IMR-90 (cell line): ENCODE measurements at regions of chr12 and their contacts with region 1.

Region 1: DNA sequence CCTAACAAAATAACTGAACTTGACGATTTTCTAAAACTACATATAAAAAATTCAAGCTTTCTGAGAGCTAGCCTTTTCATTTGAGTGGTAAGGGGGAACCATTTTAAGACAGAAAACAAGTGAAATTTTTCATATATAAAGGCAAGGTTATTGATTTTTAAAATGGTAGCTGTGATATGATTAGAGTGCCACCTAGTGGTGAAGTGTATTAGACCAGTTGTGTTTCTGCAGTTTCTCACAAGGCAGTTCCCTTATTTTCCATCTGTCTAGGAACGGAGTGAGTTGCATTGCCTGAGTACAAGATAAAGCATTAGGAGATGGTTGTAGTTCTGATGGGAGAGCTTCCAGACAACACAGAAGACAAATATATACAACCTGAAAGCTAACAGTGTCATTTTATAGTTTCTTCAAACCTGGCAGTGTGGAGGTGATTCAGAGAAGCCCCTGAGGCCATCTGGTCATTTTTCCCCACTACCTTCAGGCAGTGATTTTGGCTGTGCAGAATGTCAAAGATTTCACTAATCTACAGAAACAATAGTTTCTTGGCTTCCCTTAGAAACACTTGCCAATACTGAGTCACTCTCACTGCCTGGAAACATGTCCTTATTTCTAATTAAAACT is 180.8 kb downstream of the C12orf50 start:
- DNase-seq: peak; percentile 82
- ATAC-seq: peak; percentile 72
- H3K4me3 ChIP-seq: no peak overlapping the region
- H3K27ac ChIP-seq: no peak overlapping the region
- H3K4me1 ChIP-seq: peaks cover 3% of the 10 kb centered on the region; the same call in 1 of the 2 replicates
- H3K27me3 ChIP-seq: no peaks in the 10 kb centered on the region
- CTCF ChIP-seq: peak; percentile 92
- POLR2A ChIP-seq: no peak
- RAD21 ChIP-seq: peak; percentile 96

Region 2: GRCh38 chr12:85920324-85920947 is 1927.9 kb before region 1 on chr12:
- CTCF ChIA-PET with region 1: no interaction called
- POLR2A ChIA-PET with region 1: no interaction called
- dilution Hi-C with region 1: no loop called
- in situ Hi-C with region 1: no loop called
- intact Hi-C with region 1: loop called (anchors 5 kb)
- DNase-seq: peak; percentile 6
- ATAC-seq: no peak; the same call in 1 of the 2 replicates
- H3K4me3 ChIP-seq: no peak overlapping the region
- H3K27ac ChIP-seq: no peak overlapping the region
- H3K4me1 ChIP-seq: no peaks in the 10 kb centered on the region
- H3K27me3 ChIP-seq: no peaks in the 10 kb centered on the region
- CTCF ChIP-seq: peak; percentile 56
- POLR2A ChIP-seq: no peak
- RAD21 ChIP-seq: peak; percentile 32

Region 3: DNA sequence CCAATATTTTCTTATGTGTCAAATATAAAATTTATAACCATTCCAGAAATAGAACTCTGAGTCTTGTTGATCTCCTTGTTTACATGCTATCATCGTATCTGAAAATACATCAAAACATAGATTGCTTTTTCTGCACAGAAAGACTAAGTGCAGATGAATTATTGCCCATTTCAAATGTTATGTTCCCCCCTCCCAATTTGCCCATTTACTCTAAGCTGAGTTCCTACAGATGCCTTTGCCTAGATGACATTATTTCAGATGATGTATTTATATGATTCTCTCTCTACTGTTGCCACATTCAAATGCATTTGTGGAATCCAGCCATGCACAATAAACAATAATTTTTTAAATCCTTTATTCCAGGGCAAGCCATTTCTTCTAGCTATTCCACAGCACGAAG is 782.0 kb before region 1 on chr12:
- CTCF ChIA-PET with region 1: no interaction called
- POLR2A ChIA-PET with region 1: no interaction called
- dilution Hi-C with region 1: no loop called
- in situ Hi-C with region 1: no loop called
- intact Hi-C with region 1: loop called (anchors 1 kb)
- DNase-seq: no peak
- ATAC-seq: no peak
- H3K4me3 ChIP-seq: no peak overlapping the region
- H3K27ac ChIP-seq: no peak overlapping the region
- H3K4me1 ChIP-seq: no peaks in the 10 kb centered on the region
- H3K27me3 ChIP-seq: no peaks in the 10 kb centered on the region
- CTCF ChIP-seq: no peak
- POLR2A ChIP-seq: no peak
- RAD21 ChIP-seq: no peak

Region 4: DNA sequence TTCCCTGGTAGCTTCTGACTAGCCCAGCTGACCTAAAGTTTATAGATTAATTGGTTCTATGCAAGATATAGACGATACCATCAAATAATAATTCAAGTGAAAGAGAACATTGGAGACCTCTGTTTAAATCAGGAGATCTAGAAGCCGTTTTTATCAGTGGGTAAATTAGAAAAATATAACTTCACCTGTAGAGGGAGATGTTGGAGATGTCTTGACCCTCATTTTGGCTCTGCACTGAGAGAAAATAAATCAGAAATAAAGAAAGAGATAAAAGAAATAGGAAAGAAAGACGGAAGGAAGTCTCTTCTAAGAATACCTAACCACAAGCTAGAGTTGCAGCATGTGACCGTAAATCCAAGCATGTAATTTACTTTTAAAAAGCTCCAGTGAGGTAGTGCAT is 503.7 kb before region 1 on chr12:
- CTCF ChIA-PET with region 1: no interaction called
- POLR2A ChIA-PET with region 1: no interaction called
- dilution Hi-C with region 1: no loop called
- in situ Hi-C with region 1: no loop called
- intact Hi-C with region 1: loop called (anchors 2 kb)
- DNase-seq: no peak
- ATAC-seq: no peak
- H3K4me3 ChIP-seq: no peak overlapping the region
- H3K27ac ChIP-seq: no peak overlapping the region
- H3K4me1 ChIP-seq: no peaks in the 10 kb centered on the region
- H3K27me3 ChIP-seq: no peaks in the 10 kb centered on the region
- CTCF ChIP-seq: peak; percentile 30; the same call in 1 of the 2 replicates
- POLR2A ChIP-seq: no peak
- RAD21 ChIP-seq: peak; percentile 24; the same call in 1 of the 2 replicates

Region 5: DNA sequence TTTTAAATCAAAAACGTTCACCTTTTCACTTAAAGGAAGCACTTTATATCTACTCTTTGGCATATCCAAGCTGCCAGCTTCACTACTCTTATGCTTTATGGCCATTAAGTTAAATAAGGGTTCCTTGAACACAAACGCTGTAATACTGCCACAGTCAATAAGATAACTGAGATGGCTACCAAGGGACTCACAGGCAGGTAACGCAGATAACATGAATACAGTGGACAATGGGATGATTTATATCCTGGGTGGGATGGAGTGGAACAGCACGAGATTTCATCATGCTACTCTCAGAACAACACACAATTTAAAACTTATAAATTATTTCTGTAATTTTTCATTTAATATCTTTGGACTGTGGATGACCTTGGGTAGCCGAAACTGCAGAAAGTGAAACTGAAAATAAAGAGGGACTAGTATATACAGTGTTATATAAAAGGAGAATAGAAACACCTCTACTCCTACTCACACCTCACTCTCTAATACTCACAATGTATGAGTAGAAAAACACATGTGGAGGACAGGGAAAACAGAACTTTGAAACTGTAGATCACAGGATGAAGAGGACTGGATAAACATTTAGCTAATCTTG is 186.5 kb before region 1 on chr12:
- CTCF ChIA-PET with region 1: no interaction called
- POLR2A ChIA-PET with region 1: no interaction called
- dilution Hi-C with region 1: no loop called
- in situ Hi-C with region 1: no loop called
- intact Hi-C with region 1: loop called (anchors 5 kb)
- DNase-seq: peak; percentile 3
- ATAC-seq: peak; percentile 76
- H3K4me3 ChIP-seq: no peak overlapping the region; the same call in 1 of the 2 replicates
- H3K27ac ChIP-seq: no peak overlapping the region
- H3K4me1 ChIP-seq: peaks cover 3% of the 10 kb centered on the region; the same call in 1 of the 2 replicates
- H3K27me3 ChIP-seq: no peaks in the 10 kb centered on the region
- CTCF ChIP-seq: no peak
- POLR2A ChIP-seq: no peak
- RAD21 ChIP-seq: no peak

Region 6: GRCh38 chr12:87801860-87802720 is 46.3 kb before region 1 on chr12:
- CTCF ChIA-PET with region 1: no interaction called
- POLR2A ChIA-PET with region 1: no interaction called
- dilution Hi-C with region 1: no loop called
- in situ Hi-C with region 1: no loop called
- intact Hi-C with region 1: no loop called
- DNase-seq: no peak
- ATAC-seq: no peak
- H3K4me3 ChIP-seq: no peak overlapping the region
- H3K27ac ChIP-seq: no peak overlapping the region
- H3K4me1 ChIP-seq: peaks cover 8% of the 10 kb centered on the region; the same call in 1 of the 2 replicates
- H3K27me3 ChIP-seq: no peaks in the 10 kb centered on the region
- CTCF ChIP-seq: no peak
- POLR2A ChIP-seq: no peak
- RAD21 ChIP-seq: no peak

Region 7: DNA sequence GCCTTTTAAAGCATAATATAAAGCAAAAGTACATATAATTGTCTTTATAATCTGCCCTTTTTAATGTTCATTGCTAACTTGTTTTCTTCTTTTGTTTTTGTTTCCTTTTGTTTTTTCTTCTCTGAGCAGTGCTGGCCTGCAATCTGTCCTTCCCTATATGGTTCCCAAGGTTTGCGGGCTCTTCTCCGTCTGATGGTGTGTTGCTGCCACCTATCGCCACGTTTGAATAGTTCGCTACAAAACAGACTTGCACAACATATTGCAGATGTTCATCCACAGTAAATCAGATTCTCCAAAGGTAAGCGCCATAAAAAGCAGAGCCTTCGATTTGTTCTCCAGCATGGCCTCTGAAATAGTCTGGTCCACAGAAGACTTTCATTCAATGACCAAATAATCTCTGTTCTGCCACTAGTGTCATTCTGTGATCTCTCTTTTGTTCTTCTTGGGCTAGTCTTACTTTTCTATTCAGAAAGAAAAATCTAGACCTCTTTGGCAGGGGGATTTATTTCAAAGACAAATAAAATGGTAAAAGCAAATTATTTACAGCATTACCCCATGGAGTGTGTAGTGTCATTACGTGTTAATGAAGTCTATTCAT is 147.3 kb after region 1 on chr12:
- CTCF ChIA-PET with region 1: no interaction called
- POLR2A ChIA-PET with region 1: no interaction called
- dilution Hi-C with region 1: no loop called
- in situ Hi-C with region 1: no loop called
- intact Hi-C with region 1: loop called (anchors 5 kb)
- DNase-seq: peak; percentile 73
- ATAC-seq: peak; percentile 99
- H3K4me3 ChIP-seq: no peak overlapping the region
- H3K27ac ChIP-seq: no peak overlapping the region
- H3K4me1 ChIP-seq: no peaks in the 10 kb centered on the region
- H3K27me3 ChIP-seq: no peaks in the 10 kb centered on the region; the same call in 1 of the 2 replicates
- CTCF ChIP-seq: peak; percentile 87
- POLR2A ChIP-seq: no peak
- RAD21 ChIP-seq: peak; percentile 92